MCF 10A (cell line): ENCODE measurements at regions of chr11 and their contacts with region 1.

Region 1: DNA sequence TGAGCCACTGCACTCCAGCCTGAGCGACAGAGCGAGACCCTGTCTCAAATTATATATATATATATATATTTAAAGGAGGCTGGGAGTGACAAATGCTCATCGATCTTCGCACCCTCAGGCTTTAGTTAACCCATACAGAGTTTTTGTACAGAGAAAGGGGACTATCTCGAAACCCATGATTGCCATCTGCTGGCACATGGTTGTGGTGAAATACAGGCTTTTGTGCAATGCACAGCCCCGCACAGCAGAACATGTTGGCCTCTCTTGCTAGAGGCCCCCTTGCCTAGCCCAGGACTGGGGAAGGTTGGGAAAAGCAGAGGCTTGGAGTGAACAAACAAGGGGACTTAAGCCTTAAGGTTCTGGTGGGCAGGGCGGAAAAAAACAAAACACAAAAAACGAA is 3.6 kb downstream of the MYBPC3 start:
- DNase-seq: peak; percentile 47
- H3K4me3 Mint-ChIP-seq: no peak overlapping the region
- H3K27ac Mint-ChIP-seq: no peak overlapping the region
- H3K4me1 Mint-ChIP-seq: no peaks in the 10 kb centered on the region
- H3K27me3 Mint-ChIP-seq: no peaks in the 10 kb centered on the region
- CTCF ChIP-seq: peak; percentile 9

Region 2: GRCh38 chr11:47259178-47259977 is 89.5 kb before region 1 on chr11:
- CTCF ChIA-PET with region 1: interaction called, 6 read pairs
- POLR2A ChIA-PET with region 1: no interaction called
- intact Hi-C with region 1: loop called (anchors 2 kb)
- DNase-seq: peak; percentile 47
- H3K4me3 Mint-ChIP-seq: no peak overlapping the region
- H3K27ac Mint-ChIP-seq: no peak overlapping the region
- H3K4me1 Mint-ChIP-seq: peaks cover 24% of the 10 kb centered on the region
- H3K27me3 Mint-ChIP-seq: no peaks in the 10 kb centered on the region
- CTCF ChIP-seq: peak; percentile 40